Activated CD4-positive, alpha-beta T cell treated with anti-CD3 and anti-CD28 coated beads, Interleukin-2, amount 10 ng/mL, durations not matched to agents 7 days and 5 days (primary cell): ENCODE measurements at regions of chr1 and their contacts with region 1.

Region 1: DNA sequence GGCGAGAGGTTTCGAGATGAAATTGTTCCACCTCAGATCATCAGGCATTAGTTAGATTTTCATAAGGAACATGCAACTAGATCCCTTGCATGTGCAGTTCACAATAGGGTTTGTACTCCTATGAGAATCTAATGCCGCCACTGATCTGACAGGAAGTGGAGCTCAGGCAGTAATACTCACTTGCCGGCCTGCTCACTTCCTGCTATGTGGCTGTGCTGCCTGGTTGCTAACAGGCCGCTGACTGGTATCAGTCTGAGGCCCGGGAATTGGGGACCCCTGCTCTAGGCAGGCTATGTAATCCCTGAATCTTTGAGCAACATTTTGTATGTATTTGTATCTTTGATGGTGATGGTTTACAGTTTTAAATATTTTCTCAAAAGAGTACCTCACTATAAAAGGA is 32.5 kb downstream of the XKR8 start:
- DNase-seq: peak; percentile 66
- H3K4me3 Mint-ChIP-seq: no peak overlapping the region
- H3K27ac Mint-ChIP-seq: peak overlapping the region; percentile 87
- H3K4me1 Mint-ChIP-seq: peaks cover 51% of the 10 kb centered on the region
- H3K27me3 Mint-ChIP-seq: no peaks in the 10 kb centered on the region

Region 2: GRCh38 chr1:28002600-28002999 is 10.3 kb after region 1 on chr1:
- CTCF ChIA-PET with region 1: interaction called, 19 read pairs
- POLR2A ChIA-PET with region 1: no interaction called
- DNase-seq: no peak
- H3K4me3 Mint-ChIP-seq: no peak overlapping the region
- H3K27ac Mint-ChIP-seq: no peak overlapping the region
- H3K4me1 Mint-ChIP-seq: peaks cover under 1% of the 10 kb centered on the region
- H3K27me3 Mint-ChIP-seq: no peaks in the 10 kb centered on the region